Right ventricle myocardium inferior (tissue), 1 donor: ENCODE measurements at regions of chr5 and their contacts with region 1.

Region 1: GRCh38 chr5:168291464-168291961 is at the start of gene WWC1:
- DNase-seq: no peak
- ATAC-seq: peak; percentile 61
- total RNA-seq, gene WWC1: 1.9 TPM

Region 2: DNA sequence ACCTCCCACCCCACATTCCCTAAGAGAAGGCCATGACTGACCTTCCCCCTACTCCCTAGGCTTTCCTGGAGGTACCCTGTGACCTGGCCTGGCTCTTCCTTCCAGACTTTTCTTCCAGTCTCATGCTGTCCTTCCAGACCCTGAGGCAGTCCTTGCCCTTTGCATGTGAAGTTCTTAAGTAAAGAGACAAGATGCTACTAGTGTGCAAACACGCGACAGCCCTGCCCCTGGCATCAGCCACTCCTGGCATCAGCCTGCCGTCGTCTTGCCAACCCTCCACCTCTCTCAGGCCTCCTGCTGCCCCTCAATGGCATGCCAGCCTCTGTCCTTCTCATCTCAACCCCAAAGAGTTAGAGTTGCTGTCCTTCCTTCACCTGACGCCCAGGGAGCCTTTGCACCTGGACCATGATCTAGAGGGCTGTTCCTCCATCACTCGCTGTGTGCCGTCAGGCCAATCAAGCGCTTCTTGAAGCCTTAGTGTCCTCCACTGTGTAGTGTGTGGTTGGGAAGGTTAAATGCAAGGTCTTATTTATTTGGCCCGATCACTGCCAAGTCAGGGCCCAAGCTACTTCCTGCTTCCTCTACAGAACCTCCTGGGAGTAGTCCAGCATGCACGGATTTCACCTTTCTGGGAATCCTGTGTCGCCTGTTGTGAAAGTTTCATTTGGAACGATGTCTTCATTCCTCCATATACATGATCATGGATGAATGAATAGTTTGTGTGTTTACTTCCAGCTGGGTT is 61.9 kb after region 1 on chr5:
- intact Hi-C with region 1: no loop called
- DNase-seq: no peak
- ATAC-seq: no peak

Region 3: GRCh38 chr5:168409580-168410458 is 118.3 kb after region 1 on chr5:
- intact Hi-C with region 1: loop called (anchors 10 kb)
- DNase-seq: no peak
- ATAC-seq: peak; percentile 24